ENCODE measurements at regions of chr15 and their contacts with region 1.

Region 1: GRCh38 chr15:77496710-77497103 is 76.0 kb downstream of the HMG20A start:
- DNase-seq: peak; percentile 57 to 82 (median 64)
- ATAC-seq: peak; percentile 64
- H3K4me3 ChIP-seq: no peak overlapping the region
- H3K4me3 Mint-ChIP-seq: no peak overlapping the region
- H3K27ac ChIP-seq: no peak overlapping the region
- H3K27ac Mint-ChIP-seq: no peak overlapping the region
- H3K4me1 ChIP-seq: peaks cover 16% of the 10 kb centered on the region
- H3K4me1 Mint-ChIP-seq: peaks cover 19% of the 10 kb centered on the region
- H3K27me3 ChIP-seq: no peaks in the 10 kb centered on the region
- H3K27me3 Mint-ChIP-seq: no peaks in the 10 kb centered on the region
- CTCF ChIP-seq: peak; percentile 91

Region 2: DNA sequence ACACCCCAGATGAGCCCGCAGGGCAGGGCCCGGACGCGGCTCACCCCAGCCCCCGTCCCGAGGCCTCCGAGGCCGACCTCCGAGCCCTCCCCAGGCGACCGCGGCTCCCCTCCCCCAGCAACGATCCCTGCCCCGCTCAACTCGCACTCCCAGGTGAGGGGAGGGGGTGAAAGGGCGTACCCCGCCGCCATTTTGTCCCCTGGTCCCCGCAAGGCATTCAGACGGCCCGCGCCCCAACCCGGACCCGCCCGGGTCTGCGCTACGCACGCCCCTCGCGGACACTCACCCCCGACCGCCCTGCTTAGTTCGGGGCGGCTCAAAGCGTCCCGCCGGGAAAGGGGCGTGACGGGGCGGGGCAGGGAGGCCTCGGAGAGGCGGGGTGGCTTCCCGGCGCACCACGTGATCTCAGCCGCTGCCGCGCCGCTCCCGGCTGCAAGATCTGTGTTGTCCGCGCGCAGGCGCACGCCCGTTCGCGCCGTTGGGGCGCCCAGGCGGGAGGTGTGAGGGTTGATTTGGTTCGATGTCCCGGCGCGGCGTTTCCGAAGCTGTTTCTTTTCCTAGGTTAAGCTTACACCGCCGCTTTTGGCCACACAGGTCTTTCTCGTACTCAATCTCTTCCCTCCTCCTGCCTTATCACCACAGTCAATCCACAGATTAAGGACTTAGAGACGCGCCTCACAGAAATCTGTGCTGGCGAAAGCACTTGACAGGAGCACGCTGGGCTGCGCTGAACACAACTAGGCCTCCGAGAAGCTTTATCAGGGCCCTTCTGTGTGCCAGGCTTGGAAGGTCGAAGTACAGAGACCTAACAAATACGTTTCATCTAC is 591.5 kb before region 1 on chr15 and contains the start of gene SCAPER:
- CTCF ChIA-PET with region 1: no interaction called
- POLR2A ChIA-PET with region 1: no interaction called
- intact Hi-C with region 1: loop called in 1 of 2 experiments (anchors 2 kb)
- DNase-seq: peak; percentile 77 to 96 (median 90)
- ATAC-seq: peak; percentile 89
- H3K4me3 ChIP-seq: peak within 1 kb of the TSS; percentile 83
- H3K4me3 Mint-ChIP-seq: peak within 1 kb of the TSS; percentile 96
- H3K27ac ChIP-seq: peak within 1 kb of the TSS; percentile 60 to 75
- H3K27ac Mint-ChIP-seq: peak within 1 kb of the TSS; percentile 95
- H3K4me1 ChIP-seq: peaks cover 25% of the 10 kb centered on the region
- H3K4me1 Mint-ChIP-seq: peaks cover 31% of the 10 kb centered on the region
- H3K27me3 ChIP-seq: no peaks in the 10 kb centered on the region
- H3K27me3 Mint-ChIP-seq: no peaks in the 10 kb centered on the region
- CTCF ChIP-seq: no peak
- total RNA-seq, gene SCAPER: 40.3 to 41.2 TPM

Region 3: DNA sequence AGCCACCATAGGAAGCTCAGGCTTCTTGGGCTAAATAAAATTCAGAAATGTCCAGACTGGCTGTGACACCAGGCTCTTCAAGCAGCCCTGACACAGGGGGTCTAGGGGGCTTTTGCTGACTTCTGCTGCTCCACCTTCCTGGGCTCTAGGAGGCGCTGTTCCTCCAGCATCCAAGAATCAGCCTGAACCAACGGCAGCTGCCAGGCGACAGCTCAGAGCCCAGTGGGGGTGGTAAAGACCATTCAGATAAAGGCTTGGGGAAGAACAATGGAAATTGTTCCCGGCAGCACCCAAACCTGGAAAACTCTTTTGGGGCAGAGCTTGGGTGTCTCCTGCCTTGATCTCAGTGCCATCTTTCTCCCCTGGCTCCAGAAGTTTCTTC is 523.4 kb before region 1 on chr15:
- CTCF ChIA-PET with region 1: interaction called, 8 read pairs
- POLR2A ChIA-PET with region 1: no interaction called
- intact Hi-C with region 1: loop called in 1 of 2 experiments (anchors 1 kb)
- DNase-seq: peak; percentile 50 to 83 (median 60)
- ATAC-seq: peak; percentile 81
- H3K4me3 ChIP-seq: no peak overlapping the region
- H3K4me3 Mint-ChIP-seq: no peak overlapping the region
- H3K27ac ChIP-seq: no peak overlapping the region
- H3K27ac Mint-ChIP-seq: no peak overlapping the region
- H3K4me1 ChIP-seq: peaks cover 17% of the 10 kb centered on the region
- H3K4me1 Mint-ChIP-seq: no peaks in the 10 kb centered on the region
- H3K27me3 ChIP-seq: no peaks in the 10 kb centered on the region
- H3K27me3 Mint-ChIP-seq: no peaks in the 10 kb centered on the region
- CTCF ChIP-seq: peak; percentile 76

Region 4: GRCh38 chr15:77107531-77108355 is 389.0 kb before region 1 on chr15:
- CTCF ChIA-PET with region 1: interaction called, 4 read pairs
- POLR2A ChIA-PET with region 1: no interaction called
- intact Hi-C with region 1: loop called in 1 of 2 experiments (anchors 1 kb)
- DNase-seq: peak in 9 of 14 experiments; percentile 10 to 54 (median 37)
- ATAC-seq: no peak
- H3K4me3 ChIP-seq: no peak overlapping the region
- H3K4me3 Mint-ChIP-seq: no peak overlapping the region
- H3K27ac ChIP-seq: no peak overlapping the region
- H3K27ac Mint-ChIP-seq: no peak overlapping the region
- H3K4me1 ChIP-seq: no peaks in the 10 kb centered on the region
- H3K4me1 Mint-ChIP-seq: no peaks in the 10 kb centered on the region
- H3K27me3 ChIP-seq: no peaks in the 10 kb centered on the region
- H3K27me3 Mint-ChIP-seq: no peaks in the 10 kb centered on the region
- CTCF ChIP-seq: peak; percentile 24

Region 5: DNA sequence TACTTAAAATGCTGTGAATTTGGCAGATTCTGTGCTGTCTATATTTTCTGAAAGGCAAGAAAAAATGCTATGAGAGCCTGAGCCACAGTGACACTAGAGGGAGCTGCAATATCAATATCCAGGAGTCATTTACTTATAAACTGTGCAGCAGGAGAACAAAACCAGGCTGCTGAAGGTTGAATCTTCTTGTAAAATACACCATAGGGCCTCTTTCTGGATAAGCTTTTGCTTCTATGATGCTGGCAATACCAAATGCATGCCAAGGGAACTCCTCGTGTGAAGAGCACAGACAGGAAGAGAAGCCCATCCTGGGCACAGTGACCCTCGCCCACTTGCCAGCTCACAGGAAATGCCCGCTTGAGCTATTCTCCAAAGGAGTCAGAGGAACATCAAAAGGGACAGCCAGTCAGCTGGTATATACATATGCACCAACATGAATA is 377.8 kb before region 1 on chr15:
- CTCF ChIA-PET with region 1: interaction called, 25 read pairs
- POLR2A ChIA-PET with region 1: no interaction called
- intact Hi-C with region 1: loop called (anchors 1 kb)
- DNase-seq: peak in 7 of 14 experiments; percentile 9 to 73 (median 47)
- ATAC-seq: peak; percentile 59
- H3K4me3 ChIP-seq: no peak overlapping the region
- H3K4me3 Mint-ChIP-seq: no peak overlapping the region
- H3K27ac ChIP-seq: no peak overlapping the region
- H3K27ac Mint-ChIP-seq: no peak overlapping the region
- H3K4me1 ChIP-seq: peaks cover 4% of the 10 kb centered on the region
- H3K4me1 Mint-ChIP-seq: no peaks in the 10 kb centered on the region
- H3K27me3 ChIP-seq: no peaks in the 10 kb centered on the region
- H3K27me3 Mint-ChIP-seq: no peaks in the 10 kb centered on the region
- CTCF ChIP-seq: peak; percentile 65

Region 6: GRCh38 chr15:77186594-77187011 is 310.1 kb before region 1 on chr15:
- CTCF ChIA-PET with region 1: interaction called, 3 read pairs
- POLR2A ChIA-PET with region 1: no interaction called
- intact Hi-C with region 1: loop called (anchors 1 to 5 kb)
- DNase-seq: peak in 3 of 14 experiments; percentile 35 to 44 (median 40)
- ATAC-seq: no peak
- H3K4me3 ChIP-seq: no peak overlapping the region
- H3K4me3 Mint-ChIP-seq: no peak overlapping the region
- H3K27ac ChIP-seq: no peak overlapping the region
- H3K27ac Mint-ChIP-seq: no peak overlapping the region
- H3K4me1 ChIP-seq: peaks cover 7% of the 10 kb centered on the region
- H3K4me1 Mint-ChIP-seq: peaks cover 33% of the 10 kb centered on the region
- H3K27me3 ChIP-seq: no peaks in the 10 kb centered on the region
- H3K27me3 Mint-ChIP-seq: no peaks in the 10 kb centered on the region
- CTCF ChIP-seq: peak; percentile 16

Region 7: DNA sequence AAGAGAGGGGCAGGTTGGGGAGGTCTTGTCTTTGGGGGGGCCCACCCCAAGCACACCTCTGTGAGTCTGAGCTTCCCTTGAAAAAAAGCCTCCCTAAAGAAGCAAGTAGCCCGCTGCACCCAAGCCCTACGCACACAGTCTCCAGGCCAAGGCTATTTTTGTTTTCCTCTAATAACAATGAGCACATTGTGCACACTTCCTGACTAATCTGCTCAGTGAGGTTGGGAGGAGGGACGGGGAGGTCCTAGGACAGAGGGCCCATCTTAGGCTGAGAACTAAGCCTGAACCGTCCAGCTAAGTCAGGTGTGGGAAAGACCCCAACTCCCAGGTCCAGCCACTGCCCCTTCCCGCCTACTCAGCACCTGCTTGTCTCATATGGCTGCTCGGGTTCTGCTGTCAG is 11.2 kb after region 1 on chr15:
- CTCF ChIA-PET with region 1: no interaction called
- POLR2A ChIA-PET with region 1: no interaction called
- intact Hi-C with region 1: no loop called
- DNase-seq: no peak
- ATAC-seq: no peak
- H3K4me3 ChIP-seq: no peak overlapping the region
- H3K4me3 Mint-ChIP-seq: no peak overlapping the region
- H3K27ac ChIP-seq: no peak overlapping the region
- H3K27ac Mint-ChIP-seq: no peak overlapping the region
- H3K4me1 ChIP-seq: peaks cover 4% of the 10 kb centered on the region
- H3K4me1 Mint-ChIP-seq: peaks cover 10% of the 10 kb centered on the region
- H3K27me3 ChIP-seq: no peaks in the 10 kb centered on the region
- H3K27me3 Mint-ChIP-seq: no peaks in the 10 kb centered on the region
- CTCF ChIP-seq: no peak

Region 8: GRCh38 chr15:77907824-77908751 is 411.4 kb after region 1 on chr15:
- CTCF ChIA-PET with region 1: no interaction called
- POLR2A ChIA-PET with region 1: no interaction called
- intact Hi-C with region 1: no loop called
- DNase-seq: peak in 12 of 14 experiments; percentile 10 to 70 (median 34)
- ATAC-seq: peak; percentile 57
- H3K4me3 ChIP-seq: no peak overlapping the region
- H3K4me3 Mint-ChIP-seq: no peak overlapping the region
- H3K27ac ChIP-seq: no peak overlapping the region
- H3K27ac Mint-ChIP-seq: no peak overlapping the region
- H3K4me1 ChIP-seq: peaks cover 3% of the 10 kb centered on the region
- H3K4me1 Mint-ChIP-seq: no peaks in the 10 kb centered on the region
- H3K27me3 ChIP-seq: no peaks in the 10 kb centered on the region
- H3K27me3 Mint-ChIP-seq: peaks cover 7% of the 10 kb centered on the region
- CTCF ChIP-seq: peak; percentile 29

Measured in CD4-positive, alpha-beta T cell (primary cell).